ENCODE measurements at regions of chr7 and their contacts with region 1.

Region 1: GRCh38 chr7:28955718-28956619 is 2.2 kb downstream of the TRIL start:
- DNase-seq: peak; percentile 72
- ATAC-seq: peak; percentile 92
- H3K4me3 ChIP-seq: peak overlapping the region; percentile 56 to 81 (median 75)
- H3K27ac ChIP-seq: peak overlapping the region; percentile 70
- H3K4me1 ChIP-seq: peaks cover 22% of the 10 kb centered on the region
- H3K27me3 ChIP-seq: no peaks in the 10 kb centered on the region
- CTCF ChIP-seq: peak; percentile 89
- EP300 ChIP-seq: no peak
- POLR2A ChIP-seq: peak in 1 of 2 experiments; percentile 70; a peak in 2 of 4 replicates
- RAD21 ChIP-seq: peak; percentile 80

Region 2: GRCh38 chr7:28768628-28769027 is 187.3 kb before region 1 on chr7:
- CTCF ChIA-PET with region 1: no interaction called
- POLR2A ChIA-PET with region 1: no interaction called
- in situ Hi-C with region 1: no loop called
- intact Hi-C with region 1: no loop called
- DNase-seq: no peak
- ATAC-seq: no peak
- H3K4me3 ChIP-seq: no peak overlapping the region
- H3K27ac ChIP-seq: no peak overlapping the region
- H3K4me1 ChIP-seq: no peaks in the 10 kb centered on the region
- H3K27me3 ChIP-seq: peaks cover 0 to 24% of the 10 kb centered on the region in 2 experiments; a peak in 3 of 5 replicates
- CTCF ChIP-seq: no peak
- EP300 ChIP-seq: no peak
- POLR2A ChIP-seq: no peak
- RAD21 ChIP-seq: no peak

Region 3: DNA sequence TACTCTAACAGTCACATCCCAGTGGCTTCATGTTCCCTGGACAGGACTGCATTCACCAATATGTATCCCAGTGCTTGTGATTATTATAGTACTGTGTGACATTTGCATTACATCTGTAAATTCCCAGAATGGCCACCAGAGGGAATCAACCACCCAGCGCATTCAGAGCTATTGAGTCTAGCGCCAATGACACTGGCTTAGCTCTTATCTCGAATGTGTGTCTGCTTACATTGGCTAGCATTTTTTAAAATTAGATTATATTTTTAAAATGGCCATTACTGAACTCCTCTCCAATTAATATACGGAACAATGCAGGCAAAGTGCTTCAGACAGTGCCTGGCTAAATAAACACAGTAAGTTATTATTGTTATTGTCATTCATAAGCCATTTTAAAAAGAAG is 34.1 kb before region 1 on chr7:
- CTCF ChIA-PET with region 1: interaction called, 20 read pairs
- POLR2A ChIA-PET with region 1: interaction called, 13 read pairs
- in situ Hi-C with region 1: loop called (anchors 5 kb)
- intact Hi-C with region 1: loop called (anchors 2 kb)
- DNase-seq: peak; percentile 69
- ATAC-seq: peak; percentile 94
- H3K4me3 ChIP-seq: peak overlapping the region in 1 of 3 experiments; percentile 49; a peak in 1 of 6 replicates
- H3K27ac ChIP-seq: no peak overlapping the region
- H3K4me1 ChIP-seq: peaks cover 19% of the 10 kb centered on the region
- H3K27me3 ChIP-seq: no peaks in the 10 kb centered on the region
- CTCF ChIP-seq: peak; percentile 78
- EP300 ChIP-seq: no peak
- POLR2A ChIP-seq: no peak
- RAD21 ChIP-seq: no peak

Region 4: DNA sequence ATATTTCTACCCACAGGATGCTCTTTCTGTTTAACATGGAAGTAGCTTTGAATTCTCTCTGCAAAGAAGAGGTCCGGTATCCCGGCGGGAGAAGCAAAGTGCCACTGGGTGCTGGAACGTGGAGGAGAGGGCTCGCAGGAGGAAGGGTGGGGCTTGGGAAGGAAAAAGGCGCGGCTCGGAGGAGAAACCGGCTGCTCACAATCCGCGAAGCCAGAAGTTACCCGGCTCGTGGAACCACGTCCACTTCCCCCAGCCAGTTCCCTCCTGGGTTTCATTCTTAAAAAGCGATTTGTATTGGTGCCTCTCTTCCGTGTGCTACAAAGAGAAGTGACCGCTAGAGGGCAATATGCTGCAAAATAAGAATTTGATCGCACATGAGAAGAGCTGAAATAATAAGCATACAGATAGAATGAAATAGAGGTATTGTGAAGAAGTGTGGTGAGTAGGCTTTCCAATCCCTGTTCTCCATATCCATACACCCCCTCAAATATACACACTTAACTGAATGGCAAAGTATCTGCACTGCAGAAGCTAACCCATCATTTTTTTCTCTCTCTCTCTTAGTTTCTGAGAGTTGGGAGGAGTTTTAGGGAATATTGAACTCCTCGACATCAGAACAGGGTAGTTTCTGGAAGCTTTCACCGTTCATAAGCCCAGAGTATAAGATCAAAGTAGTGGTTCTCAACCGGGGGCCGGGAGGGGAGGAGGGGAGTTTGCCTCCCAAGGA is 28.9 kb before region 1 on chr7:
- CTCF ChIA-PET with region 1: interaction called, 20 read pairs
- POLR2A ChIA-PET with region 1: interaction called, 13 read pairs
- in situ Hi-C with region 1: loop called (anchors 5 kb)
- intact Hi-C with region 1: loop called (anchors 2 kb)
- DNase-seq: peak; percentile 78
- ATAC-seq: peak; percentile 88
- H3K4me3 ChIP-seq: peak overlapping the region; percentile 60 to 72 (median 63)
- H3K27ac ChIP-seq: no peak overlapping the region
- H3K4me1 ChIP-seq: peaks cover 31% of the 10 kb centered on the region
- H3K27me3 ChIP-seq: no peaks in the 10 kb centered on the region
- CTCF ChIP-seq: peak; percentile 87
- EP300 ChIP-seq: no peak
- POLR2A ChIP-seq: no peak; a peak in 1 of 4 replicates
- RAD21 ChIP-seq: peak; percentile 57; the same call in 1 of the 2 replicates

Region 5: GRCh38 chr7:29099891-29100847 is 144.2 kb after region 1 on chr7:
- CTCF ChIA-PET with region 1: interaction called, 7 read pairs
- POLR2A ChIA-PET with region 1: interaction called, 18 read pairs
- in situ Hi-C with region 1: loop called (anchors 10 kb)
- intact Hi-C with region 1: loop called (anchors 1 kb)
- DNase-seq: peak; percentile 95
- ATAC-seq: peak; percentile 97
- H3K4me3 ChIP-seq: peak overlapping the region in 2 of 3 experiments; percentile 2 to 30; a peak in 1 of 6 replicates
- H3K27ac ChIP-seq: peak overlapping the region; percentile 94
- H3K4me1 ChIP-seq: peaks cover 39% of the 10 kb centered on the region
- H3K27me3 ChIP-seq: no peaks in the 10 kb centered on the region
- CTCF ChIP-seq: peak; percentile 12; the same call in 1 of the 2 replicates
- EP300 ChIP-seq: peak; percentile 78 to 98; a peak in 3 of 4 replicates
- POLR2A ChIP-seq: peak in 1 of 2 experiments; percentile 8; a peak in 1 of 4 replicates
- RAD21 ChIP-seq: no peak

Region 6: DNA sequence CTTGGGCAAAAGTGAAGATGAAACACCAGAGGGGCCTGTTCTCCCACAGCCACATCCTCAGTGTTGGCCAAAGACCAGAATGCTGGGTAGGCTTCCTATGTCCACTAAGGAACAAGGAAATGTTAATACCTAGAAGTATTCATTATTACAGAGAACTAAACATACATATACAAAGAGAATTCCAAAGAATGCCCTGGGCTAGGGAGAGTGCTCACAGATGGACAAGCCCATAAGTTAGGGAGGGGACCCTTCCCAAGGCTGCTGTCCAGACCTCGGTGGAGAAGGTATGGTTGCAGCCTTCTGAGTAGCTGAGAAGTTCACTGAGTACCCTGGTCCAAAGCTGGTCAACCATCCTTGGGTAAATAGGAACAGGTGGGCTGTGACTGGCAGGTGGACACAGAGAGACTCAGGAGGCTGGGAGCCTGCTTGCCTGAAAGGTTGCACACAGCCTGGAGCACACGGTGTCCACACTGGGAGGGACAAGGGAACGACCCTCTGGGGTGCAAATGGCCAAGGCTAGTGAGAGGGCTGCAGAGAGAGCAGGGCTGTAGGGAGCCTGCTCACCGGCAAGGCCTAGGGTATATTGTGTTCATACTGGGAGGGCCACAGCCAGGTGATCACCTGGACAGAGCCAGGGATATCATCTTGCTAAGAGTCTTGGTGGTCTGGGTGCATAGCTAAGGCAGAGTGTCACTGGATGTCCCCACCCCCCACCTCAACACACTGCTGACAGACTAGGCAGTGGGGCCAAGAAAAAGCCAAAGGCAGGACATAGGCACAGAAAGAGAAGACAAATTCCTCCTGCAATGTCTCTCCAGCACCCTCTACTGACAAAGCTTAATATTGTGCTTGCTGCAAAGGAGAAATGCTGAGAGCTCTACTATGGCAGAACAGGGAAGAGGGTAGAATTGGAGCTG is 150.0 kb after region 1 on chr7:
- CTCF ChIA-PET with region 1: interaction called, 7 read pairs
- POLR2A ChIA-PET with region 1: interaction called, 18 read pairs
- in situ Hi-C with region 1: loop called (anchors 10 kb)
- intact Hi-C with region 1: loop called (anchors 1 kb)
- DNase-seq: peak; percentile 56
- ATAC-seq: peak; percentile 93
- H3K4me3 ChIP-seq: no peak overlapping the region
- H3K27ac ChIP-seq: no peak overlapping the region
- H3K4me1 ChIP-seq: peaks cover 18% of the 10 kb centered on the region
- H3K27me3 ChIP-seq: no peaks in the 10 kb centered on the region
- CTCF ChIP-seq: peak; percentile 90
- EP300 ChIP-seq: no peak
- POLR2A ChIP-seq: no peak
- RAD21 ChIP-seq: peak; percentile 71